ENCODE measurements at regions of chr5 and their contacts with region 1.

Region 1: GRCh38 chr5:133938929-133939328 is 29.5 kb downstream of the C5orf15 start:
- DNase-seq: peak; percentile 4
- ATAC-seq: no peak
- H3K4me3 Mint-ChIP-seq: peak overlapping the region; percentile 48
- H3K27ac Mint-ChIP-seq: peak overlapping the region; percentile 89
- H3K4me1 Mint-ChIP-seq: peaks cover 91% of the 10 kb centered on the region
- H3K27me3 Mint-ChIP-seq: no peaks in the 10 kb centered on the region
- CTCF ChIP-seq: no peak

Region 2: DNA sequence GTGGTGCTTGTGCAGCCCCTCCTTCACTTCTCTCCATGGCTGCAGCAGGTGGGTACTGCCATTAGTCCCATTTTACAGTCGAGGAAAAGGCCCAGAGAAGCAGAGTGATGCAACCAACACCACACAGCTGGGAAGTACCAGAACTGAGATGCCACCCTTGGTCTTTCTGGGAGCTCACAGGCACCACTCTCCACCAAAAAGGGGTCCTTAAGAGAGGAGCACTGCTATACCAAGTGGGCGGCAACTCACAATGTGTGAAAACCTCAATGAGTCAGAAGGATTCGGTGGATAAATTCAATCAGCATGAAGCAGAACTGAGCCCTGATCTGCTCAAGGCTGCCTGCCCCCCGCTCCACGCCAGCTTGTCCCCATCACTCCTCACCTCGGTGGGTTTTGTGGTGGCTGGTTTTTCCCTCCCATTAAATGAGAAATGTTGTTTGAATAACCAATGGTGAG is 540.3 kb before region 1 on chr5:
- CTCF ChIA-PET with region 1: interaction called, 4 read pairs
- POLR2A ChIA-PET with region 1: interaction called, 8 read pairs
- intact Hi-C with region 1: loop called (anchors 2 kb)
- DNase-seq: no peak
- ATAC-seq: peak; percentile 88
- H3K4me3 Mint-ChIP-seq: peak overlapping the region; percentile 59
- H3K27ac Mint-ChIP-seq: peak overlapping the region; percentile 94
- H3K4me1 Mint-ChIP-seq: peaks cover 48% of the 10 kb centered on the region
- H3K27me3 Mint-ChIP-seq: no peaks in the 10 kb centered on the region
- CTCF ChIP-seq: no peak

Region 3: DNA sequence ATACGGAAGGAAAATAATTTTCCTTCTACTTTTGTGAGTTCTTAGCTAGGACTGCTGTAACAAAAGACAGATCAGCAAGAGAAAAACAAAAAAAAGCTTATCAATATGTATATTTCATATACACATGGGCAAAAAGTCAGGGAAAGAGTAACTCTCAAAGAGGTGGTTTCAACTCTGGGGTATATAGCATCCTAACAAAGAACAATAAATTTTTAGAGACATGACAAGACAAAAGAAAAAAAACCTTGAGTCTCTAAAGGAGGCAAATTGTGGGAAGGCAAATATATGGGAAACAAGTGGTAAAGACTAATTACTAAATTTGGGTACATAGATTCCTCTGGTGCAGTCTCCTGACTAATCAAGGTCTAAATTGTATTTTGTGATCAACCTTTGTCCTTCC is 63.8 kb before region 1 on chr5:
- CTCF ChIA-PET with region 1: interaction called, 7 read pairs
- POLR2A ChIA-PET with region 1: interaction called, 5 read pairs
- intact Hi-C with region 1: loop called (anchors 2 kb)
- DNase-seq: no peak
- ATAC-seq: no peak
- H3K4me3 Mint-ChIP-seq: no peak overlapping the region
- H3K27ac Mint-ChIP-seq: no peak overlapping the region
- H3K4me1 Mint-ChIP-seq: peaks cover 26% of the 10 kb centered on the region
- H3K27me3 Mint-ChIP-seq: no peaks in the 10 kb centered on the region
- CTCF ChIP-seq: no peak

Region 4: GRCh38 chr5:133957591-133957990 is 18.7 kb after region 1 on chr5:
- CTCF ChIA-PET with region 1: no interaction called
- POLR2A ChIA-PET with region 1: interaction called, 4 read pairs
- intact Hi-C with region 1: loop called (anchors 1 kb)
- DNase-seq: no peak
- ATAC-seq: peak; percentile 82
- H3K4me3 Mint-ChIP-seq: peak overlapping the region; percentile 56
- H3K27ac Mint-ChIP-seq: peak overlapping the region; percentile 86
- H3K4me1 Mint-ChIP-seq: peaks cover 58% of the 10 kb centered on the region
- H3K27me3 Mint-ChIP-seq: no peaks in the 10 kb centered on the region
- CTCF ChIP-seq: no peak

Region 5: DNA sequence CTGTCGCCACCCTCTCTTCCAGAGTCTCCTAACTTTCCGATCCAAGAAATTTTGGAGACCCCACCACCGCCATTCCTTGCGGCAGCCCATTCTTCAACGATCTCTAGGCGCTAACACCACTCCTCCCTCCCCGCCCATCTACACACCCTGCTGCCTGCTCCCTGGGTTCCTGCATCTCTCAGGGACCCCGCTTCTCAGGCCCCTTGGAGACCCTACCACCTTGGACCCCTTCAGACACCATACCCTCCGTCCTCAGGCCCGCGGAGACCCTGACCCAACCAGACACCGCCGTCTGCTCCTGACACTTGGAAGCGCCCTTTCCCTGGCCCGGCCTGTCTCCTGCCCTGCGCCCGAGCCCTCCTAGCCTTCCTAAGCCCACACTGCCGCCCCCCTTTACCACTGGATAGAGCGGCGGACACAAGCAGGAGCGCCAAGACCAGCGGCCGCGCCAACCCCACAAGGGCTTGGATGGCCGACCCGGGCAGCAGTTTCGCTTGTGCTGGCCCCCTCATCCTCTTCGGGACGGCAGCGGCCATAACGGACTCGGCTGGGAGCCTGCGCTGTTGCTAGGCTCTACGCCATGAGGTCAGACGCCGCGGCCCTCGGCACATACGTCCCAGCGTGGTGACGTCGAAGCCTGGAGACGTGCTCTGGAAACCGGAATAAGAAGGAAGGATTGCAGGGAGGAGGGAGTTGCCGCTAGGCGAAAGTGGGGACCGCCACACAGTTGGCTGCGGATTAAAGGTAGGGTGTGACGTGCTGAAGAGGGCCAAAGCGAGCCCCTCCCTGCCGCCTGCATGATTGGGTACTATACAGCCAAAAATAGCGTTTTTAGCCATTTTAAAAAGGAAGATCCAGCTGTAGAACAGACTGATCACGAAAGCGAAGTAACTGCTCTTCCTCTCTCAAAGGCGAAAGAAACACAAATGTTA is 29.4 kb after region 1 on chr5 and contains the start of gene C5orf15:
- CTCF ChIA-PET with region 1: no interaction called
- POLR2A ChIA-PET with region 1: interaction called, 10 read pairs
- intact Hi-C with region 1: no loop called
- DNase-seq: peak; percentile 83
- ATAC-seq: peak; percentile 90
- H3K4me3 Mint-ChIP-seq: peak within 1 kb of the TSS; percentile 95
- H3K27ac Mint-ChIP-seq: peak within 1 kb of the TSS; percentile 96
- H3K4me1 Mint-ChIP-seq: peaks cover 58% of the 10 kb centered on the region
- H3K27me3 Mint-ChIP-seq: no peaks in the 10 kb centered on the region
- CTCF ChIP-seq: no peak
- total RNA-seq, gene C5orf15: 25.5 and 25.7 TPM in 2 replicates